B cell (primary cell): ENCODE measurements at regions of chr11 and their contacts with region 1.

Region 1: GRCh38 chr11:17563248-17563647 is 16.2 kb downstream of the OTOG start:
- DNase-seq: no peak
- ATAC-seq: no peak
- H3K4me3 ChIP-seq: no peak overlapping the region
- H3K4me3 Mint-ChIP-seq: no peak overlapping the region
- H3K27ac ChIP-seq: no peak overlapping the region
- H3K27ac Mint-ChIP-seq: no peak overlapping the region
- H3K4me1 ChIP-seq: no peaks in the 10 kb centered on the region
- H3K4me1 Mint-ChIP-seq: no peaks in the 10 kb centered on the region
- H3K27me3 ChIP-seq: no peaks in the 10 kb centered on the region
- H3K27me3 Mint-ChIP-seq: peaks cover 4% of the 10 kb centered on the region
- CTCF ChIP-seq: no peak

Region 2: DNA sequence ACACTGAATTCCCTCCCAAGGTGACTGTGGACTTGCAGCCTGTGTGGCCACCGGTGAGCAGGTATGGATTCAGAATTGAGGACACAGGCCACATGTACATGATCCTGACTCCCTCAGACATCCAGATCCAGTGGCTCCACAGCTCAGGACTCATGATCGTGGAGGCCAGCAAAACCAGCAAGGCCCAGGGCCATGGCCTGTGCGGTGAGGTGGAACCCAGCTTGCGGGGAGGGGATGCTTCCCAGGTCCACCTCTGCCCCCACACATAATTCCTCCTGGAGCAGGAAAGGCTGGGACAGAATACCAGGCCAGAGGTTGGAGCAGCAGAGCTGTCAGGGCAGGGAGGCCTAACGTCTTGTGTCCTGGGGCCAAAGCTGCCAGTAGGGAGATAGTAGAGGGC is 65.9 kb after region 1 on chr11:
- CTCF ChIA-PET with region 1: no interaction called
- POLR2A ChIA-PET with region 1: no interaction called
- intact Hi-C with region 1: loop called (anchors 10 kb)
- DNase-seq: no peak
- ATAC-seq: no peak
- H3K4me3 ChIP-seq: no peak overlapping the region
- H3K4me3 Mint-ChIP-seq: no peak overlapping the region
- H3K27ac ChIP-seq: no peak overlapping the region
- H3K27ac Mint-ChIP-seq: no peak overlapping the region
- H3K4me1 ChIP-seq: no peaks in the 10 kb centered on the region
- H3K4me1 Mint-ChIP-seq: no peaks in the 10 kb centered on the region
- H3K27me3 ChIP-seq: peaks cover 0 to 12% (median 3%) of the 10 kb centered on the region in 4 experiments
- H3K27me3 Mint-ChIP-seq: peaks cover 44% of the 10 kb centered on the region
- CTCF ChIP-seq: no peak